ENCODE measurements at regions of chr16 and their contacts with region 1.

Region 1: DNA sequence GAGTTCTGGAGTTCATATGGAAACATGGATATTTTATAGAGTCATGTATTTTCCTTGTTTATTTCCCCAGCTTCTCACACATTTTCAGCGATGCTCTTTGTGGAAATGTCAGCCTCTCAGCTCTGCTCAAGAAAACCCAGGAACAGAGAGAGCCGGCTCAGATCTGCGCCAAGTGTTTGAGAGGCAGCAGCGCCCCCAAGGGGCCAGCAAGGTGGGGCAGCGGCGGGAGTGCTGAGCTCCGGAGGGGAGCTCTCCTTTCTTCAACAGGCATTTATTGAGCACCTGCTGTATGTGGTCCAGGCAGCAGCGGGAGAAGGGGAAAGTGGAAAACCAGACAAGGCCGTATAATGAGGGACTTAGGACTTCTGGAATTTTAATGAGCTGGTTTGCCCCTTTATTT is 421.1 kb upstream of the C16orf82 start:
- DNase-seq: peak; percentile 72
- ATAC-seq: peak; percentile 67
- H3K4me3 Mint-ChIP-seq: no peak overlapping the region
- H3K27ac Mint-ChIP-seq: peak overlapping the region; percentile 39
- H3K4me1 Mint-ChIP-seq: peaks cover 39% of the 10 kb centered on the region
- H3K27me3 Mint-ChIP-seq: no peaks in the 10 kb centered on the region

Region 2: GRCh38 chr16:25838724-25839186 is 806.9 kb before region 1 on chr16:
- CTCF ChIA-PET with region 1: interaction called, 10 read pairs
- POLR2A ChIA-PET with region 1: no interaction called
- DNase-seq: peak; percentile 44
- ATAC-seq: peak; percentile 23
- H3K4me3 Mint-ChIP-seq: no peak overlapping the region
- H3K27ac Mint-ChIP-seq: no peak overlapping the region
- H3K4me1 Mint-ChIP-seq: no peaks in the 10 kb centered on the region
- H3K27me3 Mint-ChIP-seq: no peaks in the 10 kb centered on the region

Region 3: GRCh38 chr16:26569793-26570192 is 75.8 kb before region 1 on chr16:
- CTCF ChIA-PET with region 1: interaction called, 25 read pairs
- POLR2A ChIA-PET with region 1: no interaction called
- DNase-seq: peak; percentile 35
- ATAC-seq: peak; percentile 60
- H3K4me3 Mint-ChIP-seq: no peak overlapping the region
- H3K27ac Mint-ChIP-seq: no peak overlapping the region
- H3K4me1 Mint-ChIP-seq: peaks cover 9% of the 10 kb centered on the region
- H3K27me3 Mint-ChIP-seq: peaks cover 27% of the 10 kb centered on the region

Region 4: GRCh38 chr16:26598061-26598460 is 47.6 kb before region 1 on chr16:
- CTCF ChIA-PET with region 1: interaction called, 16 read pairs
- POLR2A ChIA-PET with region 1: interaction called, 6 read pairs
- DNase-seq: peak; percentile 92
- ATAC-seq: peak; percentile 92
- H3K4me3 Mint-ChIP-seq: peak overlapping the region; percentile 16
- H3K27ac Mint-ChIP-seq: peak overlapping the region; percentile 90
- H3K4me1 Mint-ChIP-seq: peaks cover 94% of the 10 kb centered on the region
- H3K27me3 Mint-ChIP-seq: no peaks in the 10 kb centered on the region

Region 5: GRCh38 chr16:26627958-26628357 is 17.7 kb before region 1 on chr16:
- CTCF ChIA-PET with region 1: interaction called, 10 read pairs
- POLR2A ChIA-PET with region 1: no interaction called
- DNase-seq: no peak
- ATAC-seq: no peak
- H3K4me3 Mint-ChIP-seq: no peak overlapping the region
- H3K27ac Mint-ChIP-seq: no peak overlapping the region
- H3K4me1 Mint-ChIP-seq: peaks cover 9% of the 10 kb centered on the region
- H3K27me3 Mint-ChIP-seq: peaks cover 8% of the 10 kb centered on the region

Region 6: DNA sequence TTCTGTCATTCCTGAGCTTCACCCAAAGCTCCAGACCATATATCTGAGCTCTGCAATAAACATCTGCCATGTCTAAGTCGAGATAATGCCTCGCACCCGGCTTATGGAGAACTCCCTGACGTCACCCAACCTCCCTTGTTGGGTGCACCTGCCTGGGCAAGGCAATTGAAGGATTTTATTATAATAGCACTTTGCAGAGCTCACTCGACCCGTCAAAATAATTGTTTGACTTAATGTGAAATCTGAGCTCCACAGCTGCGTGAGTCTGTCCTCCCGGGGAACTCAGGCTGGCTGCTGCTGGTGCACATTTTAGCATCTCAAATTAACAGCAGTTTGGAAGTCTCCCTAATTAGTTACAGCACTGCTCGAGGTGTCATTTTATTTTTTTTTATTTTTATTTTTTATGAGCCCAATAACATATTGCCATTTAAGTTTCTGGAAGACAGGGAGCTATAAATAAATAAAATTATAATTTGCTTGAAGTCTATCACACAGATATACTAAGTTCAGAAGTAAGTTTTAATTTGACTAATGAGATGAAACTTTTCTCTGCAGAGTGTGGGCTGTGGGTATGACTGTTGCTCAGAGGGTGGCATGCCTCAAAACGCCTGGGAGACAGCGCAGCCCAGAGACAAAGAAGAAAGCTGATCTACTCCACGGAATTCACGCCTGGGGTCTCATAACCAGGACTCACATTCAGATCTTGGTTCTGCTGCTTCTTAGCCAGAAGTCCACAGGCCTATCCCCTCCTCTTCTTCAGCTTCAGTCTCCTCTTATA is 19.7 kb after region 1 on chr16:
- CTCF ChIA-PET with region 1: interaction called, 11 read pairs
- POLR2A ChIA-PET with region 1: no interaction called
- DNase-seq: no peak
- ATAC-seq: peak; percentile 42
- H3K4me3 Mint-ChIP-seq: no peak overlapping the region
- H3K27ac Mint-ChIP-seq: no peak overlapping the region
- H3K4me1 Mint-ChIP-seq: peaks cover 25% of the 10 kb centered on the region
- H3K27me3 Mint-ChIP-seq: peaks cover 12% of the 10 kb centered on the region

Region 7: DNA sequence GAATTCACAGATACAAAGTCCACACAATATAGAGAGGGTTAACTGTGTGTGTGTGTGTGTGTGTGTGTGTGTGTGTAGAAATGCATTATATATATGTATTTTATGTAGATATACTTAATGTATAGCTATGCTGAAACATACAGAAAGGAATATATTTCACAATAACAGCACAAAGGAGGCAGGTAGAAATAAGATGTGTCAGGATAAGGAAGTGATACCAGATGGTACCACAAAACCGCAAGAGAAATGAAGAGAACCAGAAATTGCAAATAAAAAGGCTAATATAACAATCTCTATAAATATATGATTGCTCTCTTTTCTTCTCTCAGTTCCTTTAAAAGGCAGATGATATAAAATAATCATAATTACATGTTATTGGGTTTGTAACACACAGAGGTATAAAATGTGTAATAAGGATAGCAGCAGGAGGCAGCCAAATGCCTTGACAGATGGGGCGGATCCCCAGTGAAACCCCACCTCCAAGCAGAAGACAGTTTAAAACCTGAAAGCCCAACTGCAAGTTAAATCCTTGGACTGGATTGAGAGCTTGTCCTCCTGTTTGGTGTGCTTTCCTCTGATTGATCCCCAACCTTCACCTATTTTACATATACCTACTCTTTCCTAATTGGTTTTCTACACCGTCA is 55.8 kb after region 1 on chr16:
- CTCF ChIA-PET with region 1: no interaction called
- POLR2A ChIA-PET with region 1: no interaction called
- DNase-seq: no peak
- ATAC-seq: no peak
- H3K4me3 Mint-ChIP-seq: no peak overlapping the region
- H3K27ac Mint-ChIP-seq: no peak overlapping the region
- H3K4me1 Mint-ChIP-seq: no peaks in the 10 kb centered on the region
- H3K27me3 Mint-ChIP-seq: peaks cover 17% of the 10 kb centered on the region

Measured in activated CD8-positive, alpha-beta T cell treated with anti-CD3 and anti-CD28 coated beads, Interleukin-2, amount 10 ng/mL, durations not matched to agents 7 days and 5 days (primary cell).